ENCODE measurements at regions of chr3 and their contacts with region 1.

Region 1: DNA sequence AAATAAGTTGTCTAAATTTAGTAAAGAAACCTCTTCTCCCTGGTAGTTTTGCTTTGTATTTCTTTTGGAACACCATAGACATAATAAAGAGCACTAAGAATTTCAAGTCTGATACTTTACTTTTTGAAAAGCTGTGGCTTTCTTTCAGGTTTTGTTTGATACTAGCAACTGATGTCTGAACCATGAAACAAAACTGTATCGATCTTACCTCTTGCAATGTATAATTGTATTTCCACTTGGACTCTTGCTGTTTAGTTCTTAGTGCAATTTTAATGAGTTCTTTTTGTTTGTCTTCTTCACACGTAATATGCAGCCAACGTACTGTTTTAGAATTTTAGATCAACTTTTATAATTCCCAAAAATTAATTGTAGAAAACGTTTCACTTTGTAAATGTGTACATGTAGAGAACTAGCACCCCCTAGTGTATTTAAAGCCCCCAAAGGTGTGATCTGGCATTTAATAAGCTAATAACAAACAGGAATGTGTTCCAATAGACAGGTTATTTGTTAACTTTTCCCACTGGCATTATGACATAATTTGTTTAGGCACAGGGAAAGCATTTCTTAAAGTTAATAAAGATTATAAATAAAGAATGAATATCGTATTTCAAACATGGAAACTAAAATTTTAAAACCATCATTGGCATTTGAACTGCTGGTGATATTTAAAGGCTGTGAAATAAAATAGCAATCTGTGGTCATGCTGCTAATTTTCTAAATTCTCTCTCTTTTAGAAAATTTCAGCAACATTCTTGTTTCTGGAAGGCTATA is 289.1 kb upstream of the DNAJC19 start:
- DNase-seq: peak; percentile 31
- H3K4me3 ChIP-seq: no peak overlapping the region
- H3K27ac ChIP-seq: no peak overlapping the region
- H3K4me1 ChIP-seq: no peaks in the 10 kb centered on the region; a peak in 1 of 4 replicates
- H3K27me3 ChIP-seq: no peaks in the 10 kb centered on the region
- CTCF ChIP-seq: peak; percentile 42
- EP300 ChIP-seq: no peak
- RAD21 ChIP-seq: peak; percentile 81

Region 2: DNA sequence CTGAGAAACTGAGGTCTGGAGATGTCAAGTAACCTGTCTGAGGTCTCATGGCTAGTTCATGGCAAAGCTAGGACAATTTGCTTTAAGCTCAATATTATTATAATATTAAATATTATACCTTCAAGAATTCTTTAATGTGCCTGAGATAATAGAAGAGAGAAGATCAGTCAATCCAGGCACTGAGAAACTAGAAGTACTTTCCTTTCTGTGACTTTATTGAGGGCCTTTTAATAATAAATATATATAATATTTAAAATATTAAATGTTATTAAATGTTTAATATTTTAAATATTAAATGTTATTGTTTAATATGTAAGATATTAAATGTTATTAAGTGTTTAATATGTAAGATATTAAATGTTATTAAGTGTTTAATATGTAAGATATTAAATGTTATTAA is 144.8 kb before region 1 on chr3:
- CTCF ChIA-PET with region 1: no interaction called
- POLR2A ChIA-PET with region 1: no interaction called
- DNase-seq: no peak
- H3K4me3 ChIP-seq: no peak overlapping the region
- H3K27ac ChIP-seq: no peak overlapping the region
- H3K4me1 ChIP-seq: no peaks in the 10 kb centered on the region
- H3K27me3 ChIP-seq: no peaks in the 10 kb centered on the region
- CTCF ChIP-seq: no peak
- EP300 ChIP-seq: no peak
- RAD21 ChIP-seq: no peak

Region 3: GRCh38 chr3:181210275-181210674 is 68.4 kb before region 1 on chr3:
- CTCF ChIA-PET with region 1: interaction called, 137 read pairs
- POLR2A ChIA-PET with region 1: no interaction called
- DNase-seq: peak; percentile 8
- H3K4me3 ChIP-seq: no peak overlapping the region
- H3K27ac ChIP-seq: no peak overlapping the region
- H3K4me1 ChIP-seq: no peaks in the 10 kb centered on the region; a peak in 1 of 4 replicates
- H3K27me3 ChIP-seq: no peaks in the 10 kb centered on the region
- CTCF ChIP-seq: peak; percentile 60
- EP300 ChIP-seq: no peak
- RAD21 ChIP-seq: peak; percentile 80

Region 4: GRCh38 chr3:181252631-181253030 is 26.0 kb before region 1 on chr3:
- CTCF ChIA-PET with region 1: interaction called, 40 read pairs
- POLR2A ChIA-PET with region 1: no interaction called
- DNase-seq: peak; percentile 68
- H3K4me3 ChIP-seq: no peak overlapping the region
- H3K27ac ChIP-seq: peak overlapping the region in 1 of 2 experiments; percentile 96; a peak in 2 of 4 replicates
- H3K4me1 ChIP-seq: peaks cover 0 to 13% of the 10 kb centered on the region in 2 experiments; a peak in 2 of 4 replicates
- H3K27me3 ChIP-seq: no peaks in the 10 kb centered on the region
- CTCF ChIP-seq: no peak
- EP300 ChIP-seq: peak in 1 of 2 experiments; percentile 98; a peak in 2 of 4 replicates
- RAD21 ChIP-seq: peak; percentile 26

Region 5: DNA sequence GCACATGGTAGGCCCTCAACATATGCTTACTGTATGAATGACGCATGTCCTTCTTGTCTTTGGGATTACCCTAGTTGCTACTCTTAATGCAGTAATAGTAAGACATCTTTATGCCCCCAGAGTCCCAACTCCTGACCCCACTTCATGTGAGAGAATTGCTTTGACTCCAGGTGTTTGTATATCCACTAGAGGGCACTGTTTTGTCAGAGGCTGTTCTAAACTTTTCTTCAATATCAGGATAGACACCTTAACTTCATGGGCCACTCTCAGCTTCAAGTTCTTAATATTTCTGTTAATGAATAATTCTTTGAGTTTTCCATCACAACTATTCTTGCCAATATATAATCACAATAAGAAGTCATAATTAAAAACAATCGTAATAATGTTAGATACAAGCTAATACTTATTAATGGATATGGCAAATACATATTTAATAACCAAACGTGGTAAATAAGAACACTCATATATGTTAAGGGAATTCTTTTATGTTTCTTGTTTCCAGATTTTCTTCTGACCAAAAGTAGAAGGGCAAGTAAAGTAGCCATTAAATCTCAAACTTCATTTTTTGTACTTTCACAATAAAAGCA is 48.1 kb after region 1 on chr3:
- CTCF ChIA-PET with region 1: interaction called, 13 read pairs
- POLR2A ChIA-PET with region 1: no interaction called
- DNase-seq: no peak
- H3K4me3 ChIP-seq: no peak overlapping the region
- H3K27ac ChIP-seq: no peak overlapping the region
- H3K4me1 ChIP-seq: peaks cover 0 to 10% of the 10 kb centered on the region in 2 experiments; a peak in 2 of 4 replicates
- H3K27me3 ChIP-seq: no peaks in the 10 kb centered on the region
- CTCF ChIP-seq: peak; percentile 80
- EP300 ChIP-seq: no peak
- RAD21 ChIP-seq: peak; percentile 75

Region 6: GRCh38 chr3:181493423-181493822 is 214.8 kb after region 1 on chr3:
- CTCF ChIA-PET with region 1: no interaction called
- POLR2A ChIA-PET with region 1: no interaction called
- DNase-seq: no peak
- H3K4me3 ChIP-seq: no peak overlapping the region
- H3K27ac ChIP-seq: peak overlapping the region in 1 of 2 experiments; percentile 42; a peak in 1 of 4 replicates
- H3K4me1 ChIP-seq: no peaks in the 10 kb centered on the region
- H3K27me3 ChIP-seq: no peaks in the 10 kb centered on the region
- CTCF ChIP-seq: no peak
- EP300 ChIP-seq: peak in 1 of 2 experiments; percentile 35; a peak in 1 of 4 replicates
- RAD21 ChIP-seq: no peak

Region 7: GRCh38 chr3:181709537-181710279 is 431.1 kb after region 1 on chr3:
- CTCF ChIA-PET with region 1: interaction called, 17 read pairs
- POLR2A ChIA-PET with region 1: no interaction called
- DNase-seq: peak; percentile 72
- H3K4me3 ChIP-seq: peak overlapping the region in 1 of 2 experiments; percentile 37; a peak in 1 of 4 replicates
- H3K27ac ChIP-seq: no peak overlapping the region
- H3K4me1 ChIP-seq: peaks cover 0 to 13% of the 10 kb centered on the region in 2 experiments; a peak in 1 of 4 replicates
- H3K27me3 ChIP-seq: peaks cover 14% of the 10 kb centered on the region; the same call in 1 of the 2 replicates
- CTCF ChIP-seq: peak; percentile 90
- EP300 ChIP-seq: no peak
- RAD21 ChIP-seq: peak; percentile 88

Measured in SK-N-SH (cell line).